ENCODE measurements at regions of chr16 and their contacts with region 1.

Region 1: GRCh38 chr16:20849587-20850390 is 43.5 kb downstream of the REXO5 start:
- DNase-seq: peak; percentile 78
- H3K4me3 ChIP-seq: no peak overlapping the region
- H3K27ac ChIP-seq: peak overlapping the region in 3 of 4 donors; percentile 62 to 75 (median 64)
- H3K4me1 ChIP-seq: peaks cover 3 to 28% (median 19%) of the 10 kb centered on the region in 4 donors
- H3K27me3 ChIP-seq: no peaks in the 10 kb centered on the region
- CTCF ChIP-seq: peak; percentile 96 to 98 (median 97)
- EP300 ChIP-seq: no peak
- POLR2A ChIP-seq: no peak

Region 2: GRCh38 chr16:20675488-20676267 is 174.1 kb before region 1 on chr16:
- in situ Hi-C with region 1: no loop called
- intact Hi-C with region 1: no loop called
- DNase-seq: peak; percentile 79
- H3K4me3 ChIP-seq: peak overlapping the region; percentile 24 to 59 (median 36)
- H3K27ac ChIP-seq: peak overlapping the region; percentile 84 to 92 (median 88)
- H3K4me1 ChIP-seq: peaks cover 9 to 44% (median 29%) of the 10 kb centered on the region in 4 donors
- H3K27me3 ChIP-seq: no peaks in the 10 kb centered on the region
- CTCF ChIP-seq: no peak
- EP300 ChIP-seq: no peak
- POLR2A ChIP-seq: no peak

Region 3: DNA sequence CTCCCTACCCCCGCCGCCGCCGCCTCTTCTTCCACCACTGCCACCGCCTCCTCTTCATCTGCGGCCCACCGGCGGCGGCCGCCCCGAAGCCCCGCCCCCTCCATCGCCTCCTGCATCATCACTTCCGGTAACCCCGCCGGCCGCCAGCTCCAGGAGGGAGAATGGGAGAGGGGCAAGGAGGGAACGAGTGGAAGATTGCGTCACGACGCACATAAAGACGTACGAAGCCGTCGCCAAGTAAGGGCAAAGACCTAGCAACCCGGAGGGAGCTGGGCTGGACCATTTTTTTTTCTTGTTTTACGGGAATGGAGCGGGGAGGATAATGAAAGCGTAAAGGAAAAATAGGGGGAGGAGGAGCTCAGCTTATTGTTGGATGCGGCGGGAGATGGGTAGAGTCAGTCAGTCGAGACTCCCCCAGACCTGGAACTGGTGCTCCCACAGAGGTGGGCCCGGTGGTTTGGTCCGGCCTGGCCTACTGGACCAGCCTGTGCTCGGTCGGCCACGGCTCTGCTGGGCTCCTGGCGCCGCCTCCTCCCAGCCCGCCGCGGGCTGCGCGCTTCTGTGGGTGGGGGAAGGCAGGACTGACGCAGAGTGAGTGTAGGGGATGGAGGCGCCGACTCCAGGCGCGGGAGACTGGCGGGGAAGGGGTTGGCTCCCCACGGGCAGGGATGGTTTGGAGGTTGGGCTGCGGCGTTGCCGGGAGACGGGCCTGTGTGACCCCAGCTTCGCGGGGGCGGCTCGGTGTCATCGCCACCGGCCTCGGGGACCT is 50.7 kb after region 1 on chr16 and contains the starts of genes DCUN1D3 and LYRM1:
- in situ Hi-C with region 1: loop called in 1 of 4 experiments (anchors 5 kb)
- intact Hi-C with region 1: loop called (anchors 5 kb)
- DNase-seq: peak; percentile 96
- H3K4me3 ChIP-seq: peak within 1 kb of the TSS; percentile 62 to 84 (median 76)
- H3K27ac ChIP-seq: peak within 1 kb of the TSS; percentile 93 to 97 (median 94)
- H3K4me1 ChIP-seq: peaks cover 12 to 57% (median 37%) of the 10 kb centered on the region in 4 donors
- H3K27me3 ChIP-seq: no peaks in the 10 kb centered on the region
- CTCF ChIP-seq: no peak
- EP300 ChIP-seq: peak; percentile 67
- POLR2A ChIP-seq: peak; percentile 96
- total RNA-seq, gene DCUN1D3: 5.6 to 47.6 (median 10.5) TPM
- total RNA-seq, gene LYRM1: 7.9 to 74.6 (median 27.5) TPM

Region 4: DNA sequence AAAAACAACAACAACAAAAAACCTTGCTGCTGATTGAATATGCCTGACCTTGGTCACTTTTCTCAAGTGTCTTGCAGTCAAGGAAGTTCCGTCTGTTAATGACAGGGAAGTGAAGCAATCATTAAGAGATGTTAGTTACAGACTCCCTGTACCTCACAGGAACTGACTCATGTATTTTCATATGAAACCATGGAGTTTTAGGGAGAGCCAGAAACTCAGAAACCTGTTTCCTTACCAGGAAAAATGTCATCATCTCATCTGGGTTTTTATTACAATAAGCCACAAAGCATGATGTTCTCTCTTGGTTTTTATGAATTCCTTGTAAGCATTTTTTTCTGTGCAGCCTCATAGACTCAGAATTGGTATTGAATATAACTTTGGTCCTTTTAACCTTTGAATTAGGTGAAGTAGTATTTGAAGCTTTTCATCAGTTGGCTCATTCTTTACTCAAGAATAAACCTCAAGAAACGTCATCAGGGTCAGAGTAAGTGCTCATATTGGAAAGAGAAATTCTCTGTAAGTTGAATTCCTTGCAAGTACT is 61.1 kb after region 1 on chr16:
- in situ Hi-C with region 1: no loop called
- intact Hi-C with region 1: no loop called
- DNase-seq: no peak
- H3K4me3 ChIP-seq: no peak overlapping the region
- H3K27ac ChIP-seq: peak overlapping the region; percentile 36 to 64 (median 52)
- H3K4me1 ChIP-seq: peaks cover 6 to 35% (median 11%) of the 10 kb centered on the region in 4 donors
- H3K27me3 ChIP-seq: no peaks in the 10 kb centered on the region
- CTCF ChIP-seq: no peak
- EP300 ChIP-seq: no peak
- POLR2A ChIP-seq: no peak

Region 5: GRCh38 chr16:21083729-21084268 is 234.0 kb after region 1 on chr16:
- in situ Hi-C with region 1: loop called (anchors 5 to 10 kb)
- intact Hi-C with region 1: loop called (anchors 2 kb)
- DNase-seq: peak; percentile 71
- H3K4me3 ChIP-seq: no peak overlapping the region
- H3K27ac ChIP-seq: no peak overlapping the region
- H3K4me1 ChIP-seq: no peaks in the 10 kb centered on the region
- H3K27me3 ChIP-seq: no peaks in the 10 kb centered on the region
- CTCF ChIP-seq: peak; percentile 71 to 80 (median 79)
- EP300 ChIP-seq: no peak
- POLR2A ChIP-seq: no peak

Region 6: DNA sequence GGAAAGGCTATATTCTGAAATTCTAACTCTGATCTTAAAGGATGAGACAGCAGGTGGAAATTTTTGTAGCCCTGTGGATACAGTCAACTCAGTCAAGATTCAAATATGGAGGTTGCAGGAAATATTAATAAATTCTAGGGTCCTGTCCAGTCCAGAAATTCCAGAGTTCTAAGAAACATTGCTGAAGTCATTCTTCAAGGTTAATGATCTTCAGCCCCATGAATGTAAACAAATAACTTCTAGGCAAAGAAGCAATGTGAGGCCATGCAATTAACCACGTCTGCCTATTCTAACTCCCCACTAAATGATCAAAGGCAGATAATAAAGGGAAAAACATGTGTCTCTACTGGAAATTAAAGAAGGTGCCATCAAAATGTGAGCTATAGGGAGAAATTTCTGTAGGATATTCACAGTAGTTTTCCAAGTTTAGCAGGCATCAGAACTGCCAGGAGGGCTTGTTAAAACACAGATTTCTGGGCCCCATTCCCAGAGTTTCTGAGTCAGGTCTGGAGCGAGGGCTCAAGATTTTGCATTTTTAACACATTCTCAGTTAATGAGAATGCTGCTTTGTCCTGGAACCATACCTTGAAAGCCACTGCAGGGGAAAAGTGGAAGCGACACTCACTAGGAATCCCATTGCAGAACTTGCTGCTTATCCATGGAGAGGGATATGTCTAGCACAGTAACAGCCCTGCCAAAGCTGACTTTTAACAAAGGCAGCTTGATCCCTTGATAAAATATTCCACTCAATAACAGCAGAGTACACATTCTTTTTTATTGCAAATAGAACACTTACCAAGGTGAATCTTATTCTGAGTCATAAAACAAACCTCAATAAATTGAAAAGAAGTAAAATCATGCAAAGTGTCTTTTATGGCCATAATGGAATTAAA is 239.1 kb after region 1 on chr16:
- in situ Hi-C with region 1: loop called (anchors 5 to 10 kb)
- intact Hi-C with region 1: no loop called
- DNase-seq: no peak
- H3K4me3 ChIP-seq: no peak overlapping the region
- H3K27ac ChIP-seq: no peak overlapping the region
- H3K4me1 ChIP-seq: no peaks in the 10 kb centered on the region
- H3K27me3 ChIP-seq: peaks cover 9% of the 10 kb centered on the region
- CTCF ChIP-seq: no peak
- EP300 ChIP-seq: no peak
- POLR2A ChIP-seq: no peak